Kidney (tissue), 22 donors: ENCODE measurements at regions of chr3 and their contacts with region 1.

Region 1: GRCh38 chr3:52046186-52046913 is 10.0 kb downstream of the DUSP7 start:
- DNase-seq: peak in 1 of 5 donors; percentile 90
- H3K4me3 ChIP-seq: no peak overlapping the region
- H3K27ac ChIP-seq: no peak overlapping the region
- H3K4me1 ChIP-seq: peaks cover 0 to 14% (median 0%) of the 10 kb centered on the region in 3 donors
- H3K27me3 ChIP-seq: no peaks in the 10 kb centered on the region
- CTCF ChIP-seq: no peak

Region 2: GRCh38 chr3:51986010-51986947 is 60.1 kb before region 1 on chr3:
- intact Hi-C with region 1: no loop called
- DNase-seq: no peak
- H3K4me3 ChIP-seq: peak overlapping the region in 1 of 3 donors; percentile 82
- H3K27ac ChIP-seq: no peak overlapping the region
- H3K4me1 ChIP-seq: peaks cover 0 to 24% (median 2%) of the 10 kb centered on the region in 3 donors
- H3K27me3 ChIP-seq: no peaks in the 10 kb centered on the region
- CTCF ChIP-seq: no peak

Region 3: GRCh38 chr3:52014613-52015012 is 31.7 kb before region 1 on chr3:
- intact Hi-C with region 1: loop called (anchors 5 kb)
- DNase-seq: no peak
- H3K4me3 ChIP-seq: no peak overlapping the region
- H3K27ac ChIP-seq: no peak overlapping the region
- H3K4me1 ChIP-seq: peaks cover 0 to 33% (median 0%) of the 10 kb centered on the region in 3 donors
- H3K27me3 ChIP-seq: no peaks in the 10 kb centered on the region
- CTCF ChIP-seq: no peak